ENCODE measurements at regions of chr11 and their contacts with region 1.

Region 1: GRCh38 chr11:64233913-64234834 is at the start of gene VEGFB:
- DNase-seq: no peak
- ATAC-seq: peak; percentile 51
- H3K4me3 ChIP-seq: peak within 1 kb of the TSS; percentile 97
- H3K27ac ChIP-seq: 0 out of 2 replicates have a peak within 1 kb of the TSS, but pooled peaks have one; percentile 33
- H3K4me1 ChIP-seq: peaks cover 50% of the 10 kb centered on the region
- H3K27me3 ChIP-seq: no peaks in the 10 kb centered on the region
- CTCF ChIP-seq: no peak
- EP300 ChIP-seq: no peak
- POLR2A ChIP-seq: peak; percentile 45; the same call in 1 of the 2 replicates
- RAD21 ChIP-seq: no peak
- polyA plus RNA-seq, gene VEGFB: 7.0 to 28.1 TPM

Region 2: DNA sequence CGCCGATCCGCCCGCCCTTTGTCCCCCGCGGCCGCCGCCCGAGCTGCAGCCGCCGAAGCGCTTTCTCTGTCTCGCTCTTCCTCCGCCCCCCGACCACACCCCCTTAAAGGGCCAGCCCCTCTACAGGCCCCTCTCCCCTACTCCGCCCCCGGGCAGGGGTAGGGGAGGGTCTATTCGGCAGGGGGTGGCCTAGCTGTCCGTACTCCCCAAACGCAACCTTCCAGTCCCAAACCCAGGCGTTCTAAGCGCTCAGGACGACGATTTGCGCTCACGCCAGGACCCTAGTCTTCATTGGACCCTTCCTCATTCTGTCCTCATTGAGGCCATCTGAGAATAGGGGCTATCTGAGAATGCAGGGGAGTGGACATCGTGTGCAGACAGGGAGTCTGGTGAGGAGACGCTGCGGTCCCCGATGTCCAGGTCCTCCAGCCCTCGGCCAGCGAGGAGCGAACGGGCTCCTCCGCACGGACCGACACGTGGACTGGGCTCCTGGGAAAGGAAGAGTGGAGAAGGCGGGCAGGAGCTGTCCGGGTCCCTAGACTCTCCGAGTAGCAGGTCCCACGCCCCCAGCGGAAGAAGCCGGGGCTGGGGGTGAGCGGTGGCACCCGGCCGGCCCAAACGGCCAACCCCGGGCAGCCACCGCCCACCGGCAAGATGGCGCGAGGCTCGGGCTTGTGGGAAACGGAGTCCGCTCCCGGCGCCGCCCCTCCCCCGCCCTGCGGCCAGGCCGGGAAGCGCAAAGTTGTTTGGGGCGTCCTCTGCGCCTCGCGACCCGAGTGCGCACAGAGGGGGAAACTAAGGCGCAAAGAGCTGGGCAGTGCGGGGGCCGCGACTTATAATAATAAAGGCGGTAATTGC is 12.9 kb after region 1 on chr11 and contains the start of gene PPP1R14B:
- CTCF ChIA-PET with region 1: interaction called, 31 read pairs
- POLR2A ChIA-PET with region 1: interaction called, 77 read pairs
- RAD21 ChIA-PET with region 1: interaction called, 3 read pairs
- SMC1A ChIA-PET with region 1: no interaction called
- in situ Hi-C with region 1: no loop called
- intact Hi-C with region 1: no loop called
- DNase-seq: no peak
- ATAC-seq: peak; percentile 75
- H3K4me3 ChIP-seq: peak within 1 kb of the TSS; percentile 91
- H3K27ac ChIP-seq: peak within 1 kb of the TSS; percentile 90
- H3K4me1 ChIP-seq: peaks cover 17% of the 10 kb centered on the region
- H3K27me3 ChIP-seq: no peaks in the 10 kb centered on the region
- CTCF ChIP-seq: 0 out of 6 replicates have a peak, but pooled peaks of 1 of the 3 experiments have one; percentile 6
- EP300 ChIP-seq: no peak
- POLR2A ChIP-seq: peak; percentile 13
- RAD21 ChIP-seq: no peak
- polyA plus RNA-seq, gene PPP1R14B: 8.4 to 27.7 TPM

Region 3: DNA sequence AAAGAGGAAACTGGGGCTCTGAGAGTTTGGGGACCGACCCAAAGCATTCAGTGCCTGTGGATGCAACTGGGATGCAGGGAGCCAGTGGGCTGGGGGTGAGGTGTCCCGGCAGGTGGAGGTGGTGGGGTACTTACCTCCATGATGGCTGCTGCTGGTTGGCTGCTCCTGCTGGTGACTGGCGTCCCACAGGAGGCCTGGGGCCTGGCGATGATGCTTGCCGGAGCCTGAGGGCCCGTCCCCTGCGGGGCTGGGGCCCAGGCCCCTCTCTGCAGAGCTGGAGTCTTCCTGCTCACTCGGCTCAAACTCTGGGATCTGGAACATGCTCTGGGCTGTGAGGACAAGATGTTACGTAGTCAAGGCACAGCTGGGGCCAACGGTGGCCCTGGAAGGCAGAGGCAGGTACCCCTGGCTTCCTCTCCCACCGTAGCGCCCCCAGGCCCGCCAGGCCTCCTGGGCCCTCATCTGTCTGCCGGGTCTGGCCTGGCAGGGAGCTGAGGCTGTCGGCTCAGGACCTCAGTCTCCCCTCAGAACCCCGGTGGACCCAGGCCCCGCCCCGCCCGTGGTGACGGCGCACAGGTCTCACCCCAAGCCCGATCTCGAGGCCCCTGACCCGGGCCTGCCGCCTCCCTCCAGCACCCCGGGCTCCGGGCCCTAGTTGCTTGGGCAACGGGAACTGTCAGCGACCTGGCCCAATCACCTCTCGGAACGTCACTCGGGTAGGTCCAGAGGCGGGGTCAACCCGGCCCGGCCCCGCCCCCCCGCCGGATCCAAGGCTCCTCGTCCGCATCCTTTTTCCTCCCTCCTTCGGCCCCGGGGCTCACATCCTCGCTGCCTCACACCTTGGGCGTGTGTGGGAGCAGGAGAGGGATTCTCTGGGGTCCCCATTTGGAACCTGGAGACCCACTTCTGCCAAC is 50.1 kb after region 1 on chr11 and contains the start of gene BAD:
- CTCF ChIA-PET with region 1: no interaction called
- POLR2A ChIA-PET with region 1: no interaction called
- RAD21 ChIA-PET with region 1: no interaction called
- SMC1A ChIA-PET with region 1: no interaction called
- in situ Hi-C with region 1: no loop called
- intact Hi-C with region 1: no loop called
- DNase-seq: no peak
- ATAC-seq: peak; percentile 94
- H3K4me3 ChIP-seq: peak within 1 kb of the TSS; percentile 86
- H3K27ac ChIP-seq: peak within 1 kb of the TSS; percentile 91
- H3K4me1 ChIP-seq: peaks cover 7% of the 10 kb centered on the region
- H3K27me3 ChIP-seq: no peaks in the 10 kb centered on the region
- CTCF ChIP-seq: no peak
- EP300 ChIP-seq: no peak; a peak in 1 of 4 replicates
- POLR2A ChIP-seq: peak; percentile 78
- RAD21 ChIP-seq: no peak
- polyA plus RNA-seq, gene BAD: 1.5 to 7.4 TPM

Region 4: DNA sequence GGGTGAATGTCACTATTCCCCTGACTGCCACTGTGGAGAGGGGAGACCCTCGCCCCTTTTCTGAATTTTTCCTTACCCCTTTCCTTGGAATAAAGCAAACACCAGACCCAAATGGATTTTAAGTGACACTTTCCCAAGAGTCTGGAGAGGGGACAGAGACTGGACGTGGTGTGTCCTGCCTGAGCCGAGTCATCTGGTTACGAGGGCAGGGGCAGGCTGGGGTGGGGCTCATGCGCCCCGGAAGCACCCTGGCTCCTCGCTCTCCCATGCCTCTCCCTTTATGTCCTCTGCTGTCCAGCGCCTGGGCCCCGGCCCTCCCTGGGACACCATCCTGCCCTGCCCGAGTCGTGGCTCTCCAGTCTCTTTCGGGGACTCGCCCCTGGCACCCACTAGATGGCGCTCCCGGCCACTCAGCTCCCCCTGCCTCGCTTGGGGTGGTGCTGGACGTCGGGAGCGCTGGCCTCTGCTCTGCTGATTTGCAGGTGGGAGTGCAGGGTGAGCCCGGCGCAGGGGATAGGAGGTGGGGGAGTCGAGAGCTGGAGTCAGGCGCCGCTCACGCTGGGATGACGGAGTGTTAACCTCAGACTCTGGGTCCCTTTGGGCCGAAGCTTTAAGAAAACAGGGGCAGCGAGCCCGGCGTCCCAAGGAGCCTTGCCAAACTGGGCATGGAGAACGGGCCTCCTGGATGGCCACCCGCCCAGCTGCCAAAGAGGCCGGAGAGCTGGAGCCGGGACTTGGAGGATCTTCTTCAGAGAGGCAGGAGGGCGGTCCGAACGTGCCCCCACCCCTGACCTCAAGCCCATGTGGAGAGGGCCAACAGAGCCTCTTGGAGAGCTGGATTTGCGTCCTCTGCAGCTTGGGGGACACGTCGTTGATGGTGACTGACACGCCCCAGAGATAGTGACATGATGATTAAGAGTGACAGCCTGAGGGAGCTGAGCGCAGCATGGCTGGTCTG is 214.7 kb after region 1 on chr11:
- CTCF ChIA-PET with region 1: no interaction called
- POLR2A ChIA-PET with region 1: no interaction called
- RAD21 ChIA-PET with region 1: no interaction called
- SMC1A ChIA-PET with region 1: no interaction called
- in situ Hi-C with region 1: no loop called
- intact Hi-C with region 1: no loop called
- DNase-seq: no peak
- ATAC-seq: peak; percentile 95
- H3K4me3 ChIP-seq: peak overlapping the region; percentile 67
- H3K27ac ChIP-seq: peak overlapping the region; percentile 58
- H3K4me1 ChIP-seq: peaks cover 21% of the 10 kb centered on the region
- H3K27me3 ChIP-seq: 0 out of 4 replicates have a peak, but pooled peaks cover 0 to 2% of the 10 kb centered on the region in 2 experiments
- CTCF ChIP-seq: peak; percentile 80 to 90 (median 90)
- EP300 ChIP-seq: no peak
- POLR2A ChIP-seq: no peak
- RAD21 ChIP-seq: peak; percentile 56